Left ventricle myocardium superior (tissue), 1 donor: ENCODE measurements at regions of chr6 and their contacts with region 1.

Region 1: GRCh38 chr6:150813319-150813992 is 52.0 kb upstream of the MTHFD1L start:
- DNase-seq: no peak
- ATAC-seq: peak; percentile 33

Region 2: DNA sequence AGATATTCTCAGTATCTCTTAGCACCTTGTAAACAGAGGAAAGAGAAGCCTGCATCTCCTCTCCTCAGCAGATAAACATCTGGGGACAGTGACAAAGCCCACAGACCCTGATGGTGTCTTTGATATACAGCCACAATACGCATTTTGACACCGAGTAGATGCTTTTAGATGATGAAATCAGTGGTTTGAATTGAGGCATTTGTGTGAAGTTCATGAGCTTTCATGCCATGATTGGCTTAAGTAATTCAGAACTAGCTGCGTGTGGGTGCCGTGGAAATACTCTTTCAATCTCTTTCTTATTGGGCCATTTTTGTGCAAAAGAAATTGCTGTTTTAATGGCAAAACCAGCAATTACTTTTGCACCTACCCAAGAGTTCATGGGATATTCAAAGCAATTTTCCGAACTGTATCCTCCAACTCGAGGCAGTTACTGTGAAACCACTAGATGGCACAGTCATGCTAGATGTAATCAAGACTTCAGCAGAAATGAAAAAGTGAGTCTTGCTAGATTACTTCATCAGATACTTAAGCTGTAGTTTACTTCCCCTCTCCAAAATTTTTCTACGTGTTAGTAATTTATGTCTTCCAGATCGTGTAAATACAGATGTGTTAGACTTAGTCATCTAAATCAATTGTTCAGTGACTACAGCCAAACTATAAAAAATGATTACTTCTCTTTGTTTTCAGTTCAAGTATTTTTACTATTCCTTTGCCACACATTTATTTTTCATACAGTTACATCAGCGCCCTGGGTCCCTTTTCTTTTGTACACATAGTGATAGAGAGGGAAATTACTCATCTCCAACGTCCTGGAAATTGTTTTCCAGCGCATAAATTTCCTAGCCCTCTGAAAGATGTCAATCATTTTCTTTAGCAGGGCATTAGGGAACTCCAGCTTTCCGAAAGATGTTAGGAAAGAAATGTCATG is 395.3 kb before region 1 on chr6:
- intact Hi-C with region 1: loop called (anchors 2 kb)
- DNase-seq: no peak
- ATAC-seq: peak; percentile 90

Region 3: DNA sequence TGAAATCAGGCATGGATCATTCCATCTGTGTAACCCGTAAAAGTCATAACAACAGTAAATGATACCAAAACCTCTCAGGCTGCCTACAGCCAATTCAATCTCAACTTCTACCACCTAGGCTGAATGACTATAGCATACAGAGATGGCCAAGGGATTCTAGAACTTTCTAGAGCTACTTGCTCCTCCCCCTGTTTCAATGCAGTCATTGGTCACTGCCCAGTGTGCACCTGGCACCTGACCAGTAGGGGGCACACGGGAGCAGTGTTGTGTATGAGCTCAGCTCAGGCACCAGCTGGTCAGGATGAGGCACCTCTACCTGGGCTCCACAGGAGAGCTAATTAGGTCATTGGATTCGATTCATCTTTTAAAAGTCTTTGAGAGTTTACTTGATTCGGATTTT is 127.6 kb before region 1 on chr6:
- intact Hi-C with region 1: loop called (anchors 10 kb)
- DNase-seq: no peak
- ATAC-seq: no peak

Region 4: GRCh38 chr6:151154418-151154817 is 341.0 kb after region 1 on chr6:
- intact Hi-C with region 1: no loop called
- DNase-seq: peak; percentile 64
- ATAC-seq: peak; percentile 62